ENCODE measurements at regions of chr11 and their contacts with region 1.

Region 1: DNA sequence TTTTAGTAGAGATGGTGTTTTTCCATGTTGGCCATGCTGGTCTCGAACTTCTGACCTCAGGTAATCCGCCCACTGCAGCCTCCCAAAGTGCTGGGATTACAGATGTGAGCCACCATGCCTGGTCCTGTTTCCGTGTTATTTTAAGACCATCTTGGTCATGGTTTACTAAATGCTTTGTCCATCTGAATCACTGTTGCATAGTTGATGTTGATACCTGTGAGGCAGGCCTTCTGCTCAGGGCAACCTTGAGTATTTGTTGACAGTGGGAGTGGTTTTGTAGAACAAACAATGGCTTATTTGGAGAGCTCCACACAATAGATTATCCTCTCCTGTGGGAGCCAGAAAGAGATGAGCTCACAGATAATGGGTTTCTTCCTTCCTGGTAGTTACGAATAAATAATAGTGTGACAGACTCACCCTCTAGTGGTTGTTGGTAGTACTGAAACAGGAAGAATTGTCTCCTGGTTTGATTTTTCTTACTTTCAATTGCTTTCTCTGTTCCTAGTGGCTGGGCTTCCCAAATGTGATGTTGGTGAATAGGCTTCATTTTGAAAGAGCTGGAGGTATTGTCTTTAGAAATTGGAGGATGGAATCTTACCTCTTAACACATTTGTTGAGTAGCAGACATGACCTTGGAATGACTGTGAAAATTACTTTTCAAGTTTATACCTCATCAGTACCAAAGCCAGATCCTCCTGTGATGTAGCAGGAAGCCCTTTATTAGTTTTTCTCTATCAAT is 39.0 kb downstream of the CTNND1 start:
- DNase-seq: peak in 4 of 14 experiments; percentile 27 to 80 (median 78)
- ATAC-seq: peak; percentile 93
- H3K4me3 ChIP-seq: no peak overlapping the region
- H3K4me3 Mint-ChIP-seq: no peak overlapping the region
- H3K27ac ChIP-seq: peak overlapping the region in 1 of 2 donors; percentile 45
- H3K27ac Mint-ChIP-seq: peak overlapping the region; percentile 61
- H3K4me1 ChIP-seq: peaks cover 16% of the 10 kb centered on the region
- H3K4me1 Mint-ChIP-seq: peaks cover 28% of the 10 kb centered on the region
- H3K27me3 ChIP-seq: no peaks in the 10 kb centered on the region
- H3K27me3 Mint-ChIP-seq: no peaks in the 10 kb centered on the region
- CTCF ChIP-seq: peak; percentile 93

Region 2: GRCh38 chr11:57456960-57457642 is 343.5 kb before region 1 on chr11:
- CTCF ChIA-PET with region 1: interaction called, 3 read pairs
- POLR2A ChIA-PET with region 1: no interaction called
- intact Hi-C with region 1: loop called in 1 of 2 experiments (anchors 10 kb)
- DNase-seq: peak; percentile 50 to 85 (median 66)
- ATAC-seq: peak; percentile 62
- H3K4me3 ChIP-seq: no peak overlapping the region
- H3K4me3 Mint-ChIP-seq: peak overlapping the region; percentile 83
- H3K27ac ChIP-seq: no peak overlapping the region
- H3K27ac Mint-ChIP-seq: no peak overlapping the region
- H3K4me1 ChIP-seq: peaks cover 42% of the 10 kb centered on the region
- H3K4me1 Mint-ChIP-seq: peaks cover 32% of the 10 kb centered on the region
- H3K27me3 ChIP-seq: peaks cover 33 to 36% of the 10 kb centered on the region in 2 experiments
- H3K27me3 Mint-ChIP-seq: peaks cover 51% of the 10 kb centered on the region
- CTCF ChIP-seq: peak; percentile 98

Region 3: DNA sequence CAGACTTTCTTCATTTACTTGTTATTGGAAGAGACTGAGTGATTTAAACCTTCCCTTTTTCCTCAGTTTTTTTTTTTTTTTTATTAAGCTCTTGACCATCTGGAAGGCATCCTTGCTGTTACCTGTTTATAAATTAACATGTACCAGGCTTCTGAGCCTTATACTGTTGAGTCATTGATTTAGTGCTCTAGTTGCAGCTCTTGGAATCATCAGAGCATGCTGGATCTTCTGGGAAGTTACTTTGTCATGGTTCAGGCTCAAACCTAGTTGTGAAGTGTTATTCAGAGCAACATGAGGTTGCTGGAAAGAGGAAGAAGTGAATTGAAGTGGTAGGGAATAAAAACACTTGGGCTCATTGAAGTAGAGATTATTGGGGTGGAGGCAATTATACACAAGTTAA is 126.4 kb before region 1 on chr11:
- CTCF ChIA-PET with region 1: interaction called, 7 read pairs
- POLR2A ChIA-PET with region 1: no interaction called
- intact Hi-C with region 1: loop called in 1 of 2 experiments (anchors 5 kb)
- DNase-seq: no peak
- ATAC-seq: no peak
- H3K4me3 ChIP-seq: no peak overlapping the region
- H3K4me3 Mint-ChIP-seq: no peak overlapping the region
- H3K27ac ChIP-seq: no peak overlapping the region
- H3K27ac Mint-ChIP-seq: peak overlapping the region; percentile 55
- H3K4me1 ChIP-seq: peaks cover 52% of the 10 kb centered on the region
- H3K4me1 Mint-ChIP-seq: peaks cover 81% of the 10 kb centered on the region
- H3K27me3 ChIP-seq: no peaks in the 10 kb centered on the region
- H3K27me3 Mint-ChIP-seq: no peaks in the 10 kb centered on the region
- CTCF ChIP-seq: no peak

Region 4: DNA sequence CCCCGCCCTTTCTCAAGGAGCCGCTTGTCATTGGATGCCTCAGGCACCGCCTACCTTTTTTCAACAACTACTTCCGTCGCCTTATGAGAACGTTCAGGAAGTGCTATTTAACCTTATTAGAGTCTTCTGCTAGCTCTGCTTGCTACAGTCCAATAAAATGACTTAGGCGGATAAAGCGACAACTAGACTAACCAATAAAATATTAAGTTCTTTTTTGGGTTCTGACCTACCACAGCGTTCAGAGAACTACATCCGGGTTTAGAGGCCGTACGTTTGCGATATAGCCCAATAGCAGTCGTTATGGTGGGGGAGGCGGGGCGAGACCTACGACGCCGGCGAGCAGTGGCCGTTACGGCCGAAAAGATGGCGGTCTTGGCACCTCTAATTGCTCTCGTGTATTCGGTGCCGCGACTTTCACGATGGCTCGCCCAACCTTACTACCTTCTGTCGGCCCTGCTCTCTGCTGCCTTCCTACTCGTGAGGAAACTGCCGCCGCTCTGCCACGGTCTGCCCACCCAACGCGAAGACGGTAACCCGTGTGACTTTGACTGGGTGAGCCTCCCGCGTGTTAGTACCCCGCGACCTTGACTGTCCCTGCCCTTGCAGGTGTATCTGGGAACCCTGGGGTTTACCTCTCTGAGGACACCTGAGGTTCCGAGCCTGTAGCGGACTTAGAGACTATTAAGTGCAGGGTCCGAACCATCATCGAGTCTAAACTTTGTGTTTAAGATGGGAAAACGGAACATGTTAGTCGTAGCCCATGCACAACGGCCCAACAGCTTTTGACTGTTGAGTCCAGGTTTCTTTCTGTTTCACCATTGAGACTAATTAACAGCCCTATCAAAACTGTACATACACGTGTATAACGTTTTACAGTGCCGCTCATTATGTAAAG is 88.1 kb before region 1 on chr11 and contains the start of gene TMX2:
- CTCF ChIA-PET with region 1: interaction called, 10 read pairs
- POLR2A ChIA-PET with region 1: interaction called, 15 read pairs
- intact Hi-C with region 1: loop called (anchors 2 kb)
- DNase-seq: peak; percentile 79 to 97 (median 84)
- ATAC-seq: peak; percentile 89
- H3K4me3 ChIP-seq: peak within 1 kb of the TSS; percentile 95
- H3K4me3 Mint-ChIP-seq: peak within 1 kb of the TSS; percentile 96
- H3K27ac ChIP-seq: peak within 1 kb of the TSS; percentile 85 to 95
- H3K27ac Mint-ChIP-seq: peak within 1 kb of the TSS; percentile 88
- H3K4me1 ChIP-seq: peaks cover 30% of the 10 kb centered on the region
- H3K4me1 Mint-ChIP-seq: peaks cover 53% of the 10 kb centered on the region
- H3K27me3 ChIP-seq: no peaks in the 10 kb centered on the region
- H3K27me3 Mint-ChIP-seq: no peaks in the 10 kb centered on the region
- CTCF ChIP-seq: no peak
- total RNA-seq, gene TMX2: 30.0 to 30.5 TPM

Region 5: GRCh38 chr11:57751676-57752253 is 48.8 kb before region 1 on chr11 and contains the start of gene BTBD18:
- CTCF ChIA-PET with region 1: interaction called, 45 read pairs
- POLR2A ChIA-PET with region 1: interaction called, 4 read pairs
- intact Hi-C with region 1: loop called (anchors 1 to 2 kb)
- DNase-seq: peak in 3 of 14 experiments; percentile 18 to 37 (median 26)
- ATAC-seq: peak; percentile 57
- H3K4me3 ChIP-seq: no peak within 1 kb of the TSS
- H3K4me3 Mint-ChIP-seq: no peak within 1 kb of the TSS
- H3K27ac ChIP-seq: no peak within 1 kb of the TSS
- H3K27ac Mint-ChIP-seq: peak within 1 kb of the TSS; percentile 57
- H3K4me1 ChIP-seq: peaks cover 3% of the 10 kb centered on the region
- H3K4me1 Mint-ChIP-seq: peaks cover 12% of the 10 kb centered on the region
- H3K27me3 ChIP-seq: no peaks in the 10 kb centered on the region
- H3K27me3 Mint-ChIP-seq: no peaks in the 10 kb centered on the region
- CTCF ChIP-seq: peak; percentile 22
- total RNA-seq, gene BTBD18: not detected

Region 6: DNA sequence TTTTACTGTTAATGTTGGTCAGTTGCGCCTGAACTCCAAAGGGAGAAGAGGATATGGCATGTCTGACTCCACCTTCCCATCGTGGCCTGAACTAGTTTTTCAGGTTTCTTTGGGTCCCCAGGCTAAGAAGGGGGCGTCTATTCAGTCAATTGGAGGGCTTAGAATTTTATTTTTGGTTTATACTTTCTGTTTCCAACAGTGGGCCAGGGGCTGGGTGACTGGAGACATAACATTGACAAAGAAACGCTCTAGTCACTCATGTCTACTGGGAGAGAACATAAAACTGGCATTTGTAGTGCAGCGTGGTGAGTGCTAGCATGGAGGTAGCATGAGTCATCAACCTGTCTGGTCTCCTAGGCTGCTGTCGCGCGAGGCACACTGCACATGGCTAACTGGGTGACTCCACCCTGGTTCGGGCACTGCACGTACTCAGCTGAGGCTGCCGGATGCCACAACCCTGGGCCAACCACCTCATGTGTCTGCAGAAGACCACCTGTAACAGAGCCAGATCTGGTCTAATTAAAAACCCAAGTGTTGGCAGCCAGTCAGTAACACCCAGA is 103.0 kb after region 1 on chr11:
- CTCF ChIA-PET with region 1: no interaction called
- POLR2A ChIA-PET with region 1: no interaction called
- intact Hi-C with region 1: no loop called
- DNase-seq: peak in 5 of 14 experiments; percentile 5 to 39 (median 15)
- ATAC-seq: no peak
- H3K4me3 ChIP-seq: no peak overlapping the region
- H3K4me3 Mint-ChIP-seq: no peak overlapping the region
- H3K27ac ChIP-seq: no peak overlapping the region
- H3K27ac Mint-ChIP-seq: no peak overlapping the region
- H3K4me1 ChIP-seq: no peaks in the 10 kb centered on the region
- H3K4me1 Mint-ChIP-seq: no peaks in the 10 kb centered on the region
- H3K27me3 ChIP-seq: peaks cover 0 to 3% of the 10 kb centered on the region in 2 experiments
- H3K27me3 Mint-ChIP-seq: peaks cover 14% of the 10 kb centered on the region
- CTCF ChIP-seq: no peak

Region 7: DNA sequence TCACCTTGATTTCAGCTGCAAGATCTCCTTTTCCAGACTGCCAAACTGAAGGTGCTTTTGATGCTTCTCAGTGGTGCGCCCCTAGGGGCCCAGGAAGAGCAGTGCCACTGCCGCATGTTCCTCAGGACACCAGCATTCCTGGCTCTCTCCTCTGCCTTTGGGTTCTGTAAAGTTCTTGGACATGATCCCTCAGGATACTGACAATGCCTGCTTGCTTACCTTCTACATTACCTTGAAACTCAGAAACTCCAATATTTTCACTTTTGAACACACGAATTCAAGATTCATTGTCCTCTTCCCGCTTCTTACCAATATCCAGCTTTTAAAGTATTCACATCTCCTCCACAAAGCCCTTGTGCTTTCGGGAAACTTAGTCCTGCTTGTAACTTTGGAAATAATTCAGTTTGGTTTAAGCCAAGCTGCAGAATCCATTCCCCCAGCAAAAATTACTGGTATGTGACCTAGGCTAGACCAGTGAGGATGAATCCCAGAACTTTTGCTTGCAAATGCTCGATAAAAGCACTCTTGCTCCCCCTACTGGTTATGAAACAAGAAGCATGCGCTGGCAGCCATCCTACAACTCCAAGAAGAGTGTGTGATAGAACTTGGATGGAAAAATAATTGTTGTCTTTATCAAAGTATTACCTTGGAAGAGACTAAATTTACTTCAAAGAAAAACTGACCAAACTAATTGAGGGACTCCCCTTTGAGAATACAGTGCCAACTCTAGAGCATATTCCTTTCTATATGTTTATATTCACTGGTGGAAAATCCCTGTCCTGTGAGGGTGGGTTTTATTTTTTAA is 723.8 kb after region 1 on chr11:
- CTCF ChIA-PET with region 1: no interaction called
- POLR2A ChIA-PET with region 1: no interaction called
- intact Hi-C with region 1: loop called (anchors 5 kb)
- DNase-seq: peak in 13 of 14 experiments; percentile 16 to 84 (median 35)
- ATAC-seq: peak; percentile 65
- H3K4me3 ChIP-seq: peak overlapping the region; percentile 39
- H3K4me3 Mint-ChIP-seq: peak overlapping the region; percentile 63
- H3K27ac ChIP-seq: peak overlapping the region; percentile 50 to 83
- H3K27ac Mint-ChIP-seq: peak overlapping the region; percentile 95
- H3K4me1 ChIP-seq: peaks cover 17% of the 10 kb centered on the region
- H3K4me1 Mint-ChIP-seq: peaks cover 78% of the 10 kb centered on the region
- H3K27me3 ChIP-seq: no peaks in the 10 kb centered on the region
- H3K27me3 Mint-ChIP-seq: no peaks in the 10 kb centered on the region
- CTCF ChIP-seq: peak; percentile 93